Activated CD4-positive, alpha-beta memory T cell treated with anti-CD3 and anti-CD28 coated beads for 36 hours (primary cell): ENCODE measurements at regions of chr11 and their contacts with region 1.

Region 1: GRCh38 chr11:16986434-16987215 is 27.6 kb downstream of the PLEKHA7 start:
- DNase-seq: peak; percentile 77
- H3K4me3 Mint-ChIP-seq: no peak overlapping the region
- H3K27ac Mint-ChIP-seq: no peak overlapping the region
- H3K4me1 Mint-ChIP-seq: peaks cover 19% of the 10 kb centered on the region
- H3K27me3 Mint-ChIP-seq: no peaks in the 10 kb centered on the region

Region 2: GRCh38 chr11:16909359-16910035 is 77.1 kb before region 1 on chr11:
- CTCF ChIA-PET with region 1: no interaction called
- POLR2A ChIA-PET with region 1: no interaction called
- intact Hi-C with region 1: no loop called
- DNase-seq: peak; percentile 19
- H3K4me3 Mint-ChIP-seq: no peak overlapping the region
- H3K27ac Mint-ChIP-seq: peak overlapping the region; percentile 11
- H3K4me1 Mint-ChIP-seq: peaks cover 37% of the 10 kb centered on the region
- H3K27me3 Mint-ChIP-seq: no peaks in the 10 kb centered on the region

Region 3: DNA sequence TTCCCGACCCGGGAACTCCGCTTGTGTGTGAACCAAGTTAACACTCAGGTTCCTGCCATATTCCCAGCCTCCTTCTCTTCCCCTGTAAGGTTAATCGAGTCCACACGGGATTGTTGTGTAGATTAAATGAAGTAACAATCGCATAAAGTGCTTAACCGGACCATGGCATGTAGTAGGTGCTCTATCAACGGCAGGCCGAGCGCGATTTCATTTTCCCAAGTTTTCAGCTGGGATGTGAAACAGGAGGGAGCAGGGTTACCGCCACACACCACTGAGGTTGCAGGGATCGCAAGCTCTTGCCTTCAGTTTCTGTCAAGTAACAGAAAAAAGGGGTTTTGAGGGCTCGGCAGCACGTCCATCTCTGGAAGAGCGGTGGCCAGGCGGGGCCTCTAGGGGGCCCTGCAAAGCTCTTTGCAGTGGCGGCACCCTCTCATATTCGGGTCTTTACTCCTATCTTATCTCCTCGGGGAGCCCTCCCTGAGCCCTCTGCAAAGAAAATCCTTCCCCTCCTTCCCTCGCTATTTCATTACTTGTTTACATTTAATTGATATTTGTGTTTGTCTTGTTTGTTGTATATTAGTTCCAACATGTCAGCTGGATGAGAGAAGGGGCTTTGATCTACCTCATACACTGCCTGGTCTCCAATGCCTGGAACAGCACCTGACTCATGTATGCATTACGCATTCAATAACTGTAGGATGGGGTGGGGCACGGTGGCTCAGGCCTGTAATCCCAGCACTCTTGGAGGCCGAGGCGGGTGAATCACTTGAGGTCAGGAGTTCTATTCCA is 28.4 kb after region 1 on chr11:
- CTCF ChIA-PET with region 1: interaction called, 3 read pairs
- POLR2A ChIA-PET with region 1: no interaction called
- intact Hi-C with region 1: loop called (anchors 1 kb)
- DNase-seq: peak; percentile 38
- H3K4me3 Mint-ChIP-seq: peak overlapping the region; percentile 77
- H3K27ac Mint-ChIP-seq: no peak overlapping the region
- H3K4me1 Mint-ChIP-seq: peaks cover 3% of the 10 kb centered on the region
- H3K27me3 Mint-ChIP-seq: peaks cover 11% of the 10 kb centered on the region

Region 4: GRCh38 chr11:17154409-17155159 is 168.0 kb after region 1 on chr11:
- CTCF ChIA-PET with region 1: no interaction called
- POLR2A ChIA-PET with region 1: no interaction called
- intact Hi-C with region 1: no loop called
- DNase-seq: no peak
- H3K4me3 Mint-ChIP-seq: no peak overlapping the region
- H3K27ac Mint-ChIP-seq: no peak overlapping the region
- H3K4me1 Mint-ChIP-seq: peaks cover 11% of the 10 kb centered on the region
- H3K27me3 Mint-ChIP-seq: no peaks in the 10 kb centered on the region